MCF 10A (cell line): ENCODE measurements at regions of chr15 and their contacts with region 1.

Region 1: GRCh38 chr15:70815644-70816043 is 38.3 kb downstream of the LARP6 start:
- DNase-seq: no peak
- H3K4me3 Mint-ChIP-seq: no peak overlapping the region
- H3K27ac Mint-ChIP-seq: no peak overlapping the region
- H3K4me1 Mint-ChIP-seq: peaks cover 5% of the 10 kb centered on the region
- H3K27me3 Mint-ChIP-seq: no peaks in the 10 kb centered on the region
- CTCF ChIP-seq: no peak

Region 2: DNA sequence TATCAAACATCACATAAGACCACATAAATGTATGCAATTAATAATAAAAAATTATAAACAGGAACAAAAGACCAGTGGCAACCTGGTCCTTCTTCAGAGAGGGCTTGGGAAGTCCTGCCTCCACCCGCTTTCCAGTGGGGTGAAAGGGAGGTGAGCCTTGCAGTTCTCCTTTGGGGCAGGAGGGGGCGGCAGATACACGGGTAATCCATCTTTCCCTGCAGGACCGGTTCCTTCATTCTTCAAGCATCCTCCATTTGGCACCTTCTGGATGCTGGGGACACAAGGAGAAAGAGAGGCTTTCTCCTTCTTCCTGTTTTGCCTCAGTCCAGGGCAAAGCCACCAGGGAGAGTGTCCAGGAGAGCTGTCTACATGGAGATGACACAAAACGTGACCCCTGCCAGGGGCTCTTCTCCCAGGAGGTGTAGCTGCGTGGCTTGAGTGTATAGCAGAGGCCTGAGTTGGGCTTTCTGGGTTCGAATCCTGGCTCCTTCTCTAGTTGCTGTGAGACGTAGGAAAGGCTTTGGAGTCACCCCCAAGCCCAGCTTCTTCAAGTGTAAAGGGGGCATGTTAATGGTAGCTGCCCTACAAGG is 1339.8 kb before region 1 on chr15:
- CTCF ChIA-PET with region 1: no interaction called
- POLR2A ChIA-PET with region 1: no interaction called
- intact Hi-C with region 1: loop called (anchors 5 kb)
- DNase-seq: peak; percentile 72
- H3K4me3 Mint-ChIP-seq: no peak overlapping the region
- H3K27ac Mint-ChIP-seq: no peak overlapping the region
- H3K4me1 Mint-ChIP-seq: no peaks in the 10 kb centered on the region
- H3K27me3 Mint-ChIP-seq: no peaks in the 10 kb centered on the region
- CTCF ChIP-seq: peak; percentile 96

Region 3: DNA sequence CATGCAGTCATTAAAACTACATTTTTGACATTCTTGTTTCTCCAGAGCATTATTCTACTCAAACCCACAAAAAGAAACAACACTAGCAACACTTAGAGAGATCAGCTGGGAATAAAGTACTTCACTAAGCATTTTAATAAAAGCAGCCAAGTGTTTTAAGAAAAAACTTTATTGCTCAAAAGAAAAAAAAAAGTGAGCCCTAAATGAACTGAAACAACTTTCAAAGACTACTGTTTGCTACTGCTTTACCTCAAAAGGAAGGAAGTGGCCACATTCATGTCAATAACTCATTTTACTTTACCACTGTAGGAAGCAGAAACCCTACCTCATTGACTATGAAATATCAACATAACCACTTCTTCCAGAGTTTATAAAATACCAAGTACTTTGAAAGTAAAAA is 143.6 kb before region 1 on chr15:
- CTCF ChIA-PET with region 1: interaction called, 19 read pairs
- POLR2A ChIA-PET with region 1: interaction called, 3 read pairs
- intact Hi-C with region 1: no loop called
- DNase-seq: no peak
- H3K4me3 Mint-ChIP-seq: no peak overlapping the region
- H3K27ac Mint-ChIP-seq: no peak overlapping the region
- H3K4me1 Mint-ChIP-seq: no peaks in the 10 kb centered on the region
- H3K27me3 Mint-ChIP-seq: no peaks in the 10 kb centered on the region
- CTCF ChIP-seq: no peak

Region 4: GRCh38 chr15:70722266-70723121 is 93.2 kb before region 1 on chr15:
- CTCF ChIA-PET with region 1: interaction called, 29 read pairs
- POLR2A ChIA-PET with region 1: interaction called, 4 read pairs
- intact Hi-C with region 1: no loop called
- DNase-seq: peak; percentile 45
- H3K4me3 Mint-ChIP-seq: no peak overlapping the region
- H3K27ac Mint-ChIP-seq: no peak overlapping the region
- H3K4me1 Mint-ChIP-seq: peaks cover 5% of the 10 kb centered on the region
- H3K27me3 Mint-ChIP-seq: no peaks in the 10 kb centered on the region
- CTCF ChIP-seq: peak; percentile 62

Region 5: DNA sequence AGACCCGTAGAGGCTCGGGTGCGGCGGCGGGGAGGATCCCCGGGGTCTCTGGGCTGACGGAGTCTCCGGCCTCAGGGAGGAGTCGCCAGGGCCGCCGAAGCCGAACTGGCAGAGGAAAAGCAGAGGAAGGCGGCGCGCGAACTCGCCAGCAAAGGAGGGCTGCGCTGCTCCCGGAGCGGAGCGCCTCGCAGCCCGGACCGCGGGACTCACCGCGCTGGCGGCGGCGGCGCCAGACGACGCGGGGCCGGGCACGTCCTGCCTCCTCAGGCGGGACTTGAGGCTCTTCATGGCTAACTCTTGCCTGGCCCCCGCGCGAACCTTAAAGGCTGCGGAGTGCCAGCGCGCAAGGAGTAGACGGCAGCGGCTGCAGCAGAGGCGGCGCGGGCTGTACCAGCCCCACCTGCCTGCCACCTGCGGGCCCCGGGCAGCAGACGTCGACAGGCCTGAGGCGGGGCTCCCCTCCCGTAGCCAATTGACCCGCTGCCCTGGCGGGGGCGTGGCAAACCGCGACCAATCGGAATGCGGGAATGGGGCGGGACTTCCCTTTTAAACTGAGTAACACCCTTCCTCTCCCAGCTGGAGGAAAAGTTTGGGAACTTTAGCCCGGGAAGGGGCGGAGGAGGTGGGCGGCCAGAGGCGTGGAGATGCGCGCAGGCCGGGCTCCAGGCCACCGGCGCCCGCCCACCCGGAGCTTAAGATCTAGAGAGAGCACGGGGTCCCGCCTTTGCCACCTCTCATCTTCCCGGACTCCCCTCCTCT is 52.3 kb before region 1 on chr15 and contains the start of gene UACA:
- CTCF ChIA-PET with region 1: interaction called, 13 read pairs
- POLR2A ChIA-PET with region 1: interaction called, 5 read pairs
- intact Hi-C with region 1: loop called (anchors 1 kb)
- DNase-seq: peak; percentile 98
- H3K4me3 Mint-ChIP-seq: peak within 1 kb of the TSS; percentile 93
- H3K27ac Mint-ChIP-seq: peak within 1 kb of the TSS; percentile 85
- H3K4me1 Mint-ChIP-seq: peaks cover 20% of the 10 kb centered on the region
- H3K27me3 Mint-ChIP-seq: no peaks in the 10 kb centered on the region
- CTCF ChIP-seq: no peak
- total RNA-seq, gene UACA: 32.6 and 37.0 TPM in 2 replicates

Region 6: GRCh38 chr15:70799667-70800450 is 15.8 kb before region 1 on chr15:
- CTCF ChIA-PET with region 1: interaction called, 27 read pairs
- POLR2A ChIA-PET with region 1: interaction called, 3 read pairs
- intact Hi-C with region 1: no loop called
- DNase-seq: peak; percentile 75
- H3K4me3 Mint-ChIP-seq: no peak overlapping the region
- H3K27ac Mint-ChIP-seq: peak overlapping the region; percentile 82
- H3K4me1 Mint-ChIP-seq: peaks cover 24% of the 10 kb centered on the region
- H3K27me3 Mint-ChIP-seq: no peaks in the 10 kb centered on the region
- CTCF ChIP-seq: no peak

Region 7: DNA sequence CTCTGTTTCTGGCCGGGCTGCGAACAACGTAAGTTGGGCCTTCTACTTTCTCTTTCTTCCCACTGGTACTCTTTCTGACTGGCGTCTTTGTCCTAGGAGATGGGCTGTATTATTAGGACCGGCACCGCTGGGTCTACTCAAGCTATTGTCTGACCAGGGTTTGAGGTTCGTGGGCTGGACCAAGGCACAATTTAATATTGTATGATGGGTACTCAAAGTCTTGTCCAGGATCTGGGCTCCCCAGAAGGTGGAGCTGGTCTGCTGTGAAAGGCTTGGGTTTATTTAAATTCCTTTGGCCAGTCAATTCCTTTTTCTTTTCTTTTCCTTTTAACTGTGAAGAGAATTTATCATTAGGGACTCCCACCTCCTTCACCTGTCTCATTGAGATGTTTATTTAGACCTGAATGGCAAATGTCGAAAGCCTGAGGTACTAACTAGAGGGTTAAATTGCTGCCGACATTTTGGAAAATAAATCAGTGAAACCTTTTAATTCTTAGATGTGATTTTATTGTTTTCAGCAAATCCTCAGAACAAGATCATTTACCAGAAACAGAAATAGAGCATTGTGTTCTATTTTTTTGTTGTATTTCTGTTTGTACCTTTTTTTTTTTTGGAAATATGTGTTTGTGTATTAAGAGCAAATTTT is 77.4 kb after region 1 on chr15:
- CTCF ChIA-PET with region 1: no interaction called
- POLR2A ChIA-PET with region 1: no interaction called
- intact Hi-C with region 1: no loop called
- DNase-seq: peak; percentile 58
- H3K4me3 Mint-ChIP-seq: peak overlapping the region; percentile 87
- H3K27ac Mint-ChIP-seq: peak overlapping the region; percentile 53
- H3K4me1 Mint-ChIP-seq: peaks cover 17% of the 10 kb centered on the region
- H3K27me3 Mint-ChIP-seq: no peaks in the 10 kb centered on the region
- CTCF ChIP-seq: peak; percentile 34

Region 8: DNA sequence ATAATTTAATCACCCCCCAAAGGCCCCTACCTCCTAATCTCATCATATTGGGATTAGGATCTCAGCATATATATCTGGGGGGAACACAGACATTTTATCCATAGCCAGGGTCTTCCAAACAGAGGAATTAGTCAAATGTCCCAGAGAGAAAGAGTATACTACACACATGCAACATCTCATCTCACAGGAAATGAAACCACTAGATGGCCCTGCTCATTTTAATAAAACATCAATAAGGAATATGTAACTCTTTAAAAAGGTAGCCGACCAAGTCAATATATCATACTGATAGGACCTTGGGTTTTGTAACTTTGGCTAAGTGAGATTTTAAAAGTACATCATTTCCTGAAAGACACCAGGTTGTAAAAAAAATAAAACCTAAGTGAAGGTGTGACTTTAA is 254.0 kb after region 1 on chr15:
- CTCF ChIA-PET with region 1: no interaction called
- POLR2A ChIA-PET with region 1: no interaction called
- intact Hi-C with region 1: no loop called
- DNase-seq: no peak
- H3K4me3 Mint-ChIP-seq: no peak overlapping the region
- H3K27ac Mint-ChIP-seq: no peak overlapping the region
- H3K4me1 Mint-ChIP-seq: peaks cover 21% of the 10 kb centered on the region
- H3K27me3 Mint-ChIP-seq: no peaks in the 10 kb centered on the region
- CTCF ChIP-seq: no peak

Region 9: DNA sequence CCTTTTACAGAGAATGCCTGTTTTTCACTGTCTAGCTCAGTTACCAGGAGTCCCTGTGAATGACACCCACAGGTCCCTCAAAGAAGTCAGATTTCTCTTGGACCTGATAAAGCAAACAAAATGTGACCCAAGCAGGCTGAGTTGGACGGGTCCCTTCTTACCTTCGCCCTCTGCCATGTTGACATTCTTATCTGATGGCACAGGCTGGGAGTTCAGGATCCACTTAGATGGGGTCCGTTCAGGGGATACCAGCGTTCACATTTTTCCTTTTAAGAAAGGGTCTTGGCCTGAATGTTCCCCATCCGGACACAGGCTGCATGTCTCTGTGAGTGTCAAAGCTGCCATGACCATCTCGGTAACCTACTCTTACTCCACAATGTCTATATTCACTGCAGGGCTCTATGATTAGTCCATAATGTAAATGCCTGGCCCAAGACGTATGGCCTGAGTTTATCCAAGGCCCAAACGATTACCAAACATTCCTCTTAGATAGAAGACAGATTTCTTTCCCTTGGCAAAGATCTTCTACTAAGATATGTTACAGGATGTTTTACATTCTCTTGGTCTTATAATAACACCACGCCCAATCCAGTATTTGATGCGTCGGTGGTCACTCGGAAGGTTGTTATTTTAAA is 478.7 kb after region 1 on chr15:
- CTCF ChIA-PET with region 1: no interaction called
- POLR2A ChIA-PET with region 1: no interaction called
- intact Hi-C with region 1: no loop called
- DNase-seq: no peak
- H3K4me3 Mint-ChIP-seq: peak overlapping the region; percentile 45
- H3K27ac Mint-ChIP-seq: peak overlapping the region; percentile 95
- H3K4me1 Mint-ChIP-seq: peaks cover 52% of the 10 kb centered on the region
- H3K27me3 Mint-ChIP-seq: no peaks in the 10 kb centered on the region
- CTCF ChIP-seq: no peak